ENCODE measurements at regions of chr17 and their contacts with region 1.

Region 1: DNA sequence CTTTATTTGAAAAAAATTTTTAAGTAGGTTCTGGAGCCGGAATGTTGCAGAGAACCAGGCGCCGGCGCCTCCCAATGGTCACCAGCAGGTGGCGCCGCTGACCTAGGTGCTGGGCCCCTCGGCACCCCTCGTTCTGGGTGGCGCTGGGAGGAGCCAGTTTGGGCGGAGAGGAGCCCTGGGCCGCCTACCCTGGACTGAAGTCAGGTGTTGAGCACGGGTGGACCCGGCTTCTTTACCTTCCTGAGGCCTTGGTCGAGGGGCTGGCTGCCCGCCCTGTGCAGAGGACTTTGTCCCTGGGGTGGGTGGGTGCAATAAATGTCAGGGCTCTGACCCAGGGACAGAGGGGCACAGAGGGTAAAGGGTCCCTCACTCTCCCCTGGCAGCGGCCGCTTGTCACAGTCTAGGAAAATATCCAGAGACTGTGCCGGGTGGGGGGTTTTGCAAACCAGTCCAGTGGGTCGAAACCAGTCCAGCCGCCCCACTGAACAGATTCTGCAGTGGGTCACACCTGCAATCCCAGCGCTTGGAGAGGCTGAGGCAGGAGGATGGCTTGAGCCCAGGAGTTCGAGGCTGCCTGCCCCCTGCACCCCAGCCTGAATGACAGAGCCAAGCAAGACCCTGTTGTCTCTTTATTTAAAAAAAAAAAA is 30.1 kb upstream of the TNFRSF13B start:
- DNase-seq: peak; percentile 55
- H3K4me3 ChIP-seq: no peak overlapping the region
- H3K27ac ChIP-seq: no peak overlapping the region
- H3K4me1 ChIP-seq: no peaks in the 10 kb centered on the region
- H3K27me3 ChIP-seq: no peaks in the 10 kb centered on the region
- CTCF ChIP-seq: peak; percentile 83 to 96

Region 2: GRCh38 chr17:16398270-16399267 is 603.4 kb before region 1 on chr17:
- CTCF ChIA-PET with region 1: no interaction called
- dilution Hi-C with region 1: no loop called
- in situ Hi-C with region 1: no loop called
- intact Hi-C with region 1: no loop called
- DNase-seq: peak; percentile 81
- H3K4me3 ChIP-seq: no peak overlapping the region
- H3K27ac ChIP-seq: no peak overlapping the region
- H3K4me1 ChIP-seq: no peaks in the 10 kb centered on the region
- H3K27me3 ChIP-seq: no peaks in the 10 kb centered on the region
- CTCF ChIP-seq: no peak

Region 3: GRCh38 chr17:16888413-16889087 is 113.4 kb before region 1 on chr17:
- CTCF ChIA-PET with region 1: no interaction called
- dilution Hi-C with region 1: no loop called
- in situ Hi-C with region 1: no loop called
- intact Hi-C with region 1: no loop called
- DNase-seq: no peak
- H3K4me3 ChIP-seq: no peak overlapping the region
- H3K27ac ChIP-seq: no peak overlapping the region
- H3K4me1 ChIP-seq: no peaks in the 10 kb centered on the region
- H3K27me3 ChIP-seq: no peaks in the 10 kb centered on the region
- CTCF ChIP-seq: no peak

Region 4: DNA sequence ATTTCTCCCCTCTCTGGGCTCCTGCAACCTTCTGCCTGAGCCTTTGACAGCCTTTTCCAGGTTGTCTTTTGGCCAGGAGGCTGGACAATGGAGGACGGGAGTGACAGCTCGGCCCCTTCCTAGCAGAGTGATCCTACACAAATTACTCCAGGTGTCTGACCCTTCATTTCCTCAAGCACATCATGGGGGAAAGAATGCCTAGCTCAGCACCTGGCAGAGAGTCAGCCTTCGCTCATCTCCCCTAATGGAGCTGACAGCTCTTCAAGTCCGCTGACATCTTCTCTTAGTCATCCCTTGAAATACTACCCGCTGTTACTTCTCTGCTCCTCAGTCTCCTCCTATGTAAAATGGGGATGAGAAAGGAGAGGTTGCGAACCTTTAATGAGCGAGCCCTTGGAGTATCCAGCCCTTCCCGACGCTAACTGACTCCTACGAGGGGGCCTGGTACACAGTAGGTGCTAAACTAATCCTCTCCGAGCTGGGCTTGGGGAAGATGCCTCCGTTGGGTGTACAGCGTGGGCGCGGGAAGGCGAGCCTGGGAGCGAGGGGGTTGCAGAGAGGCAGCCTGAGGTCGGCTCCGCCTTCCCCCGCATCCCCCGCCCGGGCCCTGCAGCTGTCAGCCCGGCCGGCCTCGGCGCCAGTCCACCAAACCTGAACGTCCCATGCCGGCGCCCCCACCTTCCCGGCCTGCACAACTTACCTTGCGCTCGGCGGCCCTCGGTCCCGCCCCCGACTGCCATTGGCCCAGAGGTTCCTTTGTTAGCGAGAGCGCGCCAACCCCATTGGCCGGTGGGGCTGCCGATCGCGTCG is 39.8 kb after region 1 on chr17:
- CTCF ChIA-PET with region 1: no interaction called
- dilution Hi-C with region 1: no loop called
- in situ Hi-C with region 1: no loop called
- intact Hi-C with region 1: loop called (anchors 5 kb)
- DNase-seq: peak; percentile 96
- H3K4me3 ChIP-seq: peak overlapping the region; percentile 44 to 57 (median 53)
- H3K27ac ChIP-seq: peak overlapping the region; percentile 60
- H3K4me1 ChIP-seq: peaks cover 29% of the 10 kb centered on the region
- H3K27me3 ChIP-seq: no peaks in the 10 kb centered on the region
- CTCF ChIP-seq: no peak

Region 5: GRCh38 chr17:17108451-17109049 is 106.6 kb after region 1 on chr17:
- CTCF ChIA-PET with region 1: no interaction called
- dilution Hi-C with region 1: no loop called
- in situ Hi-C with region 1: no loop called
- intact Hi-C with region 1: loop called (anchors 10 kb)
- DNase-seq: no peak
- H3K4me3 ChIP-seq: no peak overlapping the region
- H3K27ac ChIP-seq: peak overlapping the region; percentile 20
- H3K4me1 ChIP-seq: peaks cover 43% of the 10 kb centered on the region
- H3K27me3 ChIP-seq: no peaks in the 10 kb centered on the region
- CTCF ChIP-seq: peak in 1 of 2 donors; percentile 31

Region 6: GRCh38 chr17:17206124-17206912 is 204.3 kb after region 1 on chr17 and contains the start of gene PLD6:
- CTCF ChIA-PET with region 1: no interaction called
- dilution Hi-C with region 1: no loop called
- in situ Hi-C with region 1: no loop called
- intact Hi-C with region 1: loop called (anchors 10 kb)
- DNase-seq: peak; percentile 59
- H3K4me3 ChIP-seq: peak within 1 kb of the TSS; percentile 14 to 64 (median 53)
- H3K27ac ChIP-seq: no peak within 1 kb of the TSS
- H3K4me1 ChIP-seq: peaks cover 32% of the 10 kb centered on the region
- H3K27me3 ChIP-seq: no peaks in the 10 kb centered on the region
- CTCF ChIP-seq: no peak
- total RNA-seq, gene PLD6: 1.8 to 4.3 TPM

Region 7: GRCh38 chr17:17313350-17313991 is 311.5 kb after region 1 on chr17:
- CTCF ChIA-PET with region 1: no interaction called
- dilution Hi-C with region 1: no loop called
- in situ Hi-C with region 1: loop called in 1 of 2 experiments (anchors 10 kb)
- intact Hi-C with region 1: loop called (anchors 1 kb)
- DNase-seq: peak; percentile 45
- H3K4me3 ChIP-seq: no peak overlapping the region
- H3K27ac ChIP-seq: no peak overlapping the region
- H3K4me1 ChIP-seq: no peaks in the 10 kb centered on the region
- H3K27me3 ChIP-seq: no peaks in the 10 kb centered on the region
- CTCF ChIP-seq: peak; percentile 76 to 89